Activated CD8-positive, alpha-beta T cell treated with anti-CD3 and anti-CD28 coated beads, Interleukin-2, amount 10 ng/mL, durations not matched to agents 7 days and 5 days (primary cell): ENCODE measurements at regions of chr12 and their contacts with region 1.

Region 1: DNA sequence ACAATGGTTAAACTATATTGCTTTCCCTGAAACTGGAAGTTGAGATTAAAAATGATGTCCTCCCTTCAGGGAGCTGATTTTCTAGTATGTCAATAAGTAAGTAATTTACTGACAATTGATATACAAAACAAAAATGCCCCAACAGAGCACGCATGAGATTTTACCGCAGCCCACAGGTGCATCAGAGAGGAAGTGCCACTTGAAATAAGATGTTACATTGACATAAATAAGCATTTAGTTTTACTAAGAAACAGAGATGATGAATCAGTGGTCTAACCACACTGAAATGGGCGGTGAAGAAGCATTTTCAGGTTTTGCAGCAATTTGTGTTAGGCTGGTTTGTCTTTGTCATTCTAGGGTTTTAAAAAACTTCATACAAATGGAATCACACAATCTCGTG is 8.8 kb upstream of the CLECL1 start:
- DNase-seq: peak; percentile 92
- ATAC-seq: peak; percentile 79
- H3K4me3 Mint-ChIP-seq: peak overlapping the region; percentile 79
- H3K27ac Mint-ChIP-seq: peak overlapping the region; percentile 96
- H3K4me1 Mint-ChIP-seq: peaks cover 68% of the 10 kb centered on the region
- H3K27me3 Mint-ChIP-seq: no peaks in the 10 kb centered on the region

Region 2: DNA sequence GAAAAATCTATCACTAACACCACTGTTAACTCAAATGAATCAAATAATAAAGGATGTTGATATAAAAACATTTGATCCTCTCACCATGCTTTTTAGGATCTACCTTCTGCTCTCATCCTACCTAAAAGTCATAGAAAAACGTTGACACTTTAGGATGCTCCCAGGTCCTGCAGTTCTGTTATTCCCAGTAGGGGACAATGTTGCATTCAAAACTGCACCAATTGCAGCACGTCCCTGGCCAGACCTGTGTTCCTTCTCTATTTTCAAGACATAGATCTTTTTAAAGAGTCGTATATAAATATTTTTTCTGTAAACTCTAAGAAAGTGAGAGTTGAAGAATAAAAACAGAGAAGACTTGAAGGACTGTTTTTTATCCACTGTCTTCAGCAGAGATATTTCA is 1137.9 kb before region 1 on chr12:
- CTCF ChIA-PET with region 1: no interaction called
- POLR2A ChIA-PET with region 1: no interaction called
- DNase-seq: no peak
- ATAC-seq: no peak
- H3K4me3 Mint-ChIP-seq: no peak overlapping the region
- H3K27ac Mint-ChIP-seq: no peak overlapping the region
- H3K4me1 Mint-ChIP-seq: peaks cover 2% of the 10 kb centered on the region
- H3K27me3 Mint-ChIP-seq: peaks cover 15% of the 10 kb centered on the region

Region 3: DNA sequence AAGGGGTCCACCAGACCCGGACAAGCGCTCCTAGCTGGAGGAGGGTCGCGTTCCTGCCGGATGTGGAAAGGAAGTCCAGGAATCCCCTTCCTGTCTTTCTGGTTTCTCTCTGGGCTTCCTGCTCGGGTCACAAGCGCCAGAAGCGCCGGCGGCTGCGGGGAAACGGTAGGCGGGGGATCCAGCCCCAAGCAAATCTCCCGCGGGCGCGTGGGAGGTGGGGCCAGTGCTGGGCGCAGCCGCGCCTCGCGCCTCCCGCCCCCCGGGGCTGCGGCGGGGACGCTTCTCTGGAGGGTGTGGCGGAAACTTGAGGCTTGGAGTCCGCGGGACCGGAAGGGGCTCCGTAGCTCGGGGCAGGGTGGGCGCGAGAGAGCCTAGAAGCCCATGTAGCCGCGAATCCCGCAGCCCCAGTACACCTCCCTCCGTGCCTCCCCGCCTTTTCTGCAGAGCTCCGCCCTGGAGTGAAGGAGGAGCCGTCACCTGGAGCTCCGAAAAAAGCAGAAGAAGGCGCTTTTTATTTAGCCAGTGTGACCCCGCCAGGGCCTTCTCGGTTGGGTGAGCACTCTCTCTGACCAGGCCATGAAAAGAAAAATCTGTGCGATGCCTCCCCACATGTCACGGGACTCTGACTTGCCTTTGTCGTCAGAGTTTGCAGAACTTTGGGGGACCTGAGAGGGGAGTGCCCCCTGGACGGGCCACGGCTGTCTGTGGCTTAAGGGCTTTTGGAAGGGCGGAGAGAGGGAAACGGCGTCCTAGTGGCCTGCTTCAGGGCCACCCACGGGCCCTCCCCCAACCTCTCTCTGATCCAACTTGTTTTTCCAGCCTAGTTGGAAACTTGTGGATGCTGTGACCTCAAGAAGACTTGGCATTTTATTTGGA is 93.7 kb before region 1 on chr12:
- CTCF ChIA-PET with region 1: interaction called, 10 read pairs
- POLR2A ChIA-PET with region 1: interaction called, 47 read pairs
- DNase-seq: peak; percentile 97
- ATAC-seq: peak; percentile 83
- H3K4me3 Mint-ChIP-seq: peak overlapping the region; percentile 88
- H3K27ac Mint-ChIP-seq: peak overlapping the region; percentile 100
- H3K4me1 Mint-ChIP-seq: peaks cover 56% of the 10 kb centered on the region
- H3K27me3 Mint-ChIP-seq: peaks cover 2% of the 10 kb centered on the region

Region 4: DNA sequence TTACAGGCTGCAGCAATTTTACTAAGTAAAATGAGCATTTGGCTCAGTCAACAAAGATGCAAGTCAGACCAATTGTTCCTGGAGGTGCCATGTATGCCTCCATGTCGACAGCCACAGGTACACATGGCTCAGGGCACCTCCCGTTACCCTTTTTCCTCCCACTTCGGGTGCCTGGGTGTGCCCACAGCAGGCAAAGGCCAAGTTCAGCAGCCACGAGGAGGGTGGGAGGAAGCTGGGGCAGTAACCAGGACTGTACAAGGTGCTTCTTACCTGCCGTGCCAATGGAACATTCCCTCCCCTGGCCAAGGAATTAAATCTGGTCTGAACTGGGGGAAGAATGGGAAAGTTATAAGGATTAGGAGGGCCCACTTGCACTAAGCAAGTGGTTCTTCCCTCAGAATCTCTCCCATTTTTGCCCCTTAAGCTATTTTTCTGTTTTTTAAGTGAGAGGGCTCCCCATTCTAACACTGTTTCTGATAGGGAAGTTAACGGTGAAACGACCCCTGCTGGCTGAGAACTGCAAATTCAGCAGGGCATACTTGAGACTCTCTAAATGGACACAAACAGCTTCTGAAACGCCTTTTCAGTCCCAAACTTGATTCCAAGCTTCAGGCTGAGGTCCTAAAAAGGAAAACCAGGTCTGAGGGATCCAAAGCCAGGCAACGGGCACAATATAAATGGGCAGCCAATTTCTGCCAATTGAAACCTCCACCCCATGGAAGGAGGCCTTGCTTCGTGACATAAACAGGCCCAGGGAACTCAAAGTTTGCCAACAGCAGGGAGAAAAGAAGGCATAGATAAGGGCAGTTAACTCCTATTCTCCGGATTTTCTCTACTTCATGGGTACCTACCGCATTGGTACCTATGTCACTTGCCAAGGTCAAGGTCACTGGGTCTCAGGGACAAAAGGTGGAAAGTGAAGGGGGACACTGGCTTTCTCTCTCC is 33.6 kb before region 1 on chr12:
- CTCF ChIA-PET with region 1: interaction called, 45 read pairs
- POLR2A ChIA-PET with region 1: interaction called, 4 read pairs
- DNase-seq: peak; percentile 81
- ATAC-seq: peak; percentile 84
- H3K4me3 Mint-ChIP-seq: peak overlapping the region; percentile 55
- H3K27ac Mint-ChIP-seq: peak overlapping the region; percentile 85
- H3K4me1 Mint-ChIP-seq: peaks cover 48% of the 10 kb centered on the region
- H3K27me3 Mint-ChIP-seq: no peaks in the 10 kb centered on the region

Region 5: DNA sequence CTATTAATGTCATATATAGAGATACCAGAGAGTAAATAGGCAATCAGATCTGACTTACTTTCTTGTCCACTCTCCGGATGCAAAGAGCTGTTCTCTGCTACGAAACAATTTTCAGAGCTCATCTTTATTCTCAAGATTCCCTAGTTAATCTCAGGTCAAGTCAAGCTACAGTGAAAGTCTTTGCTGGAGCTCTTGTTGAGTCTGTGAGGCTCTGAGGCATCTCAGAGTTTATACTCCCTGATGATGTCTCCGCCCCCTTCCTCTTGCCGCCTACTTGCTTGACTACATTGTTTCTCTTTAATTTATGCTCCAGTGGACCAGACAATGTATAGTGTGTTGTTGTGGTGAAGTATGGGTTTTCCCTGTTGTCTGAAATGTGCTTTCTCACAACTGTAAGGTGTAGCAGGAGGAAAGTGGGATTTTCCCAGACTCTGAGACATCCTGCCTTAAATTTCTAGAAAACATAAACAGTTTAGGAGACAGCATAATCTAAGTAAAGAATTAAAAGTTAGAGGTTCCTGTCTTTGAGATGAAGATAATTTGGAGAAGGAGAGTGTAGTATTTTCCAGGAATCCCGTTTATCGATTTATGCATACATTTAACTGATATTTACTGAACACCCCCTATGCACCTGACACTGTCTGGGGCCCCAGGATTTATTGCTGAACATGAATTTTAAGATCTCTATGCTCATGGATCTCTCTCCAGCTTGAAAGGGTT is 19.1 kb after region 1 on chr12 and contains the start of gene CD69:
- CTCF ChIA-PET with region 1: interaction called, 24 read pairs
- POLR2A ChIA-PET with region 1: interaction called, 71 read pairs
- DNase-seq: peak; percentile 92
- ATAC-seq: peak; percentile 60
- H3K4me3 Mint-ChIP-seq: peak within 1 kb of the TSS; percentile 92
- H3K27ac Mint-ChIP-seq: peak within 1 kb of the TSS; percentile 94
- H3K4me1 Mint-ChIP-seq: peaks cover 39% of the 10 kb centered on the region
- H3K27me3 Mint-ChIP-seq: no peaks in the 10 kb centered on the region
- total RNA-seq, gene CD69: 115 to 116 TPM

Region 6: GRCh38 chr12:9869307-9870161 is 127.8 kb after region 1 on chr12 and contains the start of gene CLEC2B:
- CTCF ChIA-PET with region 1: interaction called, 15 read pairs
- POLR2A ChIA-PET with region 1: interaction called, 4 read pairs
- DNase-seq: peak; percentile 58
- ATAC-seq: peak; percentile 55
- H3K4me3 Mint-ChIP-seq: peak within 1 kb of the TSS; percentile 79
- H3K27ac Mint-ChIP-seq: peak within 1 kb of the TSS; percentile 91
- H3K4me1 Mint-ChIP-seq: peaks cover 22% of the 10 kb centered on the region
- H3K27me3 Mint-ChIP-seq: no peaks in the 10 kb centered on the region
- total RNA-seq, gene CLEC2B: 55.2 to 58.8 TPM

Region 7: DNA sequence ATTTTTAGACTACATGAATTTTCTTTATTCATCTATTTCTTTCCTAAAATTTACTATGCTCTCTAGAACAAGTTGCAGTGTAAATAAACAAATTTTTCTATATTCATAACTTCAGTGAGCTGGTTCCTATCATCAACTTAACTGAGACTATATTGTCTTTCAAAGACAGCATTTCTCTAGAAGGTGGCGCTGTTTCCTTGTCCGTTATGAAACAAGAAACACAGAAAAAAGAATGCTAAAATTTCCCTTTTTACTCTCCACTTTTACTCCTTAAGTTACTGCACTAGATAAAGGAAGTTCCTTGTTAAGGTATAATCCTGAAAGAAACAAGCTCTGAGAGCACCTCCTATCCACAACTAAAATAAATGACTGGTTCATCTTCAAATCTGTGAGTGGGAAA is 198.6 kb after region 1 on chr12:
- CTCF ChIA-PET with region 1: interaction called, 14 read pairs
- POLR2A ChIA-PET with region 1: no interaction called
- DNase-seq: peak; percentile 48
- ATAC-seq: no peak
- H3K4me3 Mint-ChIP-seq: no peak overlapping the region
- H3K27ac Mint-ChIP-seq: no peak overlapping the region
- H3K4me1 Mint-ChIP-seq: peaks cover 19% of the 10 kb centered on the region
- H3K27me3 Mint-ChIP-seq: peaks cover 13% of the 10 kb centered on the region